Left colon (tissue), 2 donors: ENCODE measurements at regions of chr13 and their contacts with region 1.

Region 1: DNA sequence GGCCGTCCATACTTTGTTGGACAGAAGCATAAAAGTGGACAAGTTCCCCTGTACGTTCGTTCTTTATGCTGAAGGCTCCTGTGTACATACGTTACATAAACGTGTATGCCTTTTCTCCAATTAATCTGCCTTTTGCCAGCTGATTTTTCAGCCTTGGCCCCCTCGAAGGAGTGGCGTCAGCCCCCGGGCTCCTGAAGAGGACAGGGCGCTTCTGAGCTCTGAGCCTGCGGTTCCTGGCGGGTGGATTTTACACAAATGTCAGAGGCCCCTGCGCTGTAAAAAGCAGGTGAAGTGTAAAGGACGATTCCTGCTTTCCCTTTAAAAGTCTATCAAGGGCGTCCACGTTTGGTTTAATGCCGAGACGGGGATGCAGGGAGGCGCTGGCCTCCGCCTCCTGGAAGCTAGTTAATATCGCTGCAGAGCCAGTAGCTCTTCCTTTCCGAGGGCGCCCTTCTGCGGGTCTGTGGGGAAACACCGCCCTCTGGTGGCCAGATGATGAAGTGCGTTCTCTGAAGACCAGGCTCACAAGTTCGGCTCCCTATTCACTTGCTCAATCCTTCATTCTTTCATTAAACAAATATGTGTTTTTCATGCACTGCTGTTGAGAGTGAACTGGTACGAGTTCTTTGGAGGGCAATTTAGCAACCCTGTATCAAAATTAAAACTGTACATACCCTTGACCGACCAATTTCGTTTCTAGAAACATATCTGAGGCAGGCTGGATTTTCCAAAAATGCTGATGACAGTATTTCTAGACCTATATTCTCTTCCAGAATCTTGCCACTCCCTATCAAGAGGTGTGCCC is 62.0 kb downstream of the GPR12 start:
- DNase-seq: peak; percentile 54 to 82
- ATAC-seq: peak; percentile 93

Region 2: DNA sequence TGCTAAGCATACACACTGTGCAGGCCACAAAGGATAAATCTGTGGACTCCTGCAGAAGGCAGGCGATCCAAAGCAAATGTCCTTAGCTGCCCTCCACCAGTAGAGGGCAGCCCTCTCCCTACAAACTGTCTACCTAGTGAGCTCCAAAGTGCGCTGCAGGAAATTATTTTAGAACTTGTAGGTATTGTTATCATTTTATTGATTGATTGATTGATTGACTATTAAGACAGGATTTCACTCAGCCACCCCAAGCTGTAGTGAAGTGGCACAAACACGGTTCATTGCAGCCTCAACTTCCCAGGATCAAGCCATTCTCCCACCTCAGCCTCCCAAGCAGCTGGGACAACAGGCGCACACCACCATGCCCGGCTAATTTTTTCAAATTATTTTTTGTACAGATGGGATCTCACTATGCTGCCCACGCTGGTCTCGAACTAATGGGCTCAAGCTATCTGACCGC is 513.8 kb before region 1 on chr13:
- intact Hi-C with region 1: loop called in 1 of 2 experiments (anchors 5 kb)
- DNase-seq: peak; percentile 60 to 63
- ATAC-seq: peak; percentile 43

Region 3: DNA sequence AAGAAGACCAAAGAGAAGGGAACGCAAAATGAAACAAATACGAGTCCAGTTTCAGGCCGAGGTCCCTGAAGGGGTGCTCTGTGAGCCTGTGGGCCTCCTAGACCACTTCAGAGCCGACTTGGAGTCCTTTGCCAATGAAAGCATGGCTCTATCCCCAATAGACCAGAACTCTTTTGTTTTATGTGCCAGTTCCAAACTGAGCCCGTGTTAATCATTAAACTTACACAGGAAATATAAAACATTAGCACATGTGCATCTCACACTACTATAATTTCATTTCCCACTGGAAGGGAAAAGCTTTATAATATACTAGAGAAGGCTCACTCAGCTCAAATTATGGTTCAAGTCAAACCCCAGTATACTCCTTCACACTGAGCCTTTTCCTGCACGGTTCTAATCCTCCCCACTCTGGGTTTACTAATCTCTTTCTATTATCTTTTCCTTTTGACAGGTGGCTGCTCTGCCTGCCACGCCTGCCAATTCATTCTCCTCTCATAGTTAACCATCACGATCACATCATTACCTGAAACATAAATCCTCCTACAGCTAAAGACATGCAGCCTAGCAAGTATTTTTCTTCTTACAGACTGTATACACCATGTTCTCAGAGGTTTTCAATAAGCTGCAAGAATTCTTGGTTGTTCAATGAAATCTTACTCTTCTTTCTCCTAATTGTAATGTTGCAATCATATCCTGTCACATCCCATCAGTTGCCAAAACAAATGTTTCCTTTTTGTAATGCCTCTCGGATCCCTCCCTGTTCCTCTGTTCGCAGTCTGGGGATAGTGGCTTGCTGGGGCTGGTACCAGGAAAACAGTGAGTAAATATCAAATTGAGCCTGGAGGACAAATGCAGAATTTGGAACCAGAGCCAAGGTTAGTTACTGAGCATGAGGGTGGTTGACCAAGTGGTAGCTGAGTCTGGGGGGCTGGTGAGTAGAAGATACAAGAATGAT is 160.0 kb before region 1 on chr13:
- intact Hi-C with region 1: loop called in 1 of 2 experiments (anchors 10 kb)
- DNase-seq: no peak
- ATAC-seq: peak; percentile 55